MCF 10A (cell line): ENCODE measurements at regions of chr17 and their contacts with region 1.

Region 1: DNA sequence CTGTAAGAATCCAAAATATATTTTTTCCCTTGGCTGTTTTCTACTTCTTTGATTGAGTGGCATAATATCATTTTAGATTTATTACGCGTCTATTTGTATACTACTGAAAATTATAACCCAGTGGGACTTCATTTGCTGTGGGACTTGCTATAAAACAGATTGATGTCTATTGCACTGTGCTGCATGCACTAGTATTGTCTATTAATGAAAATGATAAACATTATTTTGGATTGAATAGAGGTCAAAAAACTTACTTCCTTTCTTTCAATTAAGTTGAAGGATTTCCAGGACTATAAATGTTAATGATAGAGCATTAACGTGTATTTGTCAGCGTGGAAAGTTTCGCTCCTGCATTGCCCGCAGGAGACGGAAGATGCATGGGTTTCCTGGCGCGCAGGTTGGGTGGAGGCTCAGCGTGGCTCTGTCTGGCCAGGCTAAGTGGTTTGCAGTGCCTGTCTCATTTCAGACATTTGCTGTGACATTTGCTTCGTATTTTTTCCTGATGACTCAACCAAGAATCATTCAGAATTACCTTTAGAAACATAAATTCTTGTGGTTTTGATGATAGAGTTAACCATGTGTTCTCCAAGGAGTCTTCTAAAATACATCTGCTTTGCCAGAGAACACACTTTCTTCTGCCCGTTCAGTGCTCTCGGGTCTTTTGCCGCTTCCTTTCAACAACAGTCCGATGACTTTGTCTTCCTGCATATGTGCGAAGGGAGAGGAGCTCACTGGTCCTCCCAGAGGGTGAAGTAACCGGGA is 216.7 kb downstream of the RPTOR start:
- DNase-seq: peak; percentile 77
- H3K4me3 Mint-ChIP-seq: peak overlapping the region; percentile 59
- H3K27ac Mint-ChIP-seq: peak overlapping the region; percentile 75
- H3K4me1 Mint-ChIP-seq: peaks cover 24% of the 10 kb centered on the region
- H3K27me3 Mint-ChIP-seq: no peaks in the 10 kb centered on the region
- CTCF ChIP-seq: no peak

Region 2: DNA sequence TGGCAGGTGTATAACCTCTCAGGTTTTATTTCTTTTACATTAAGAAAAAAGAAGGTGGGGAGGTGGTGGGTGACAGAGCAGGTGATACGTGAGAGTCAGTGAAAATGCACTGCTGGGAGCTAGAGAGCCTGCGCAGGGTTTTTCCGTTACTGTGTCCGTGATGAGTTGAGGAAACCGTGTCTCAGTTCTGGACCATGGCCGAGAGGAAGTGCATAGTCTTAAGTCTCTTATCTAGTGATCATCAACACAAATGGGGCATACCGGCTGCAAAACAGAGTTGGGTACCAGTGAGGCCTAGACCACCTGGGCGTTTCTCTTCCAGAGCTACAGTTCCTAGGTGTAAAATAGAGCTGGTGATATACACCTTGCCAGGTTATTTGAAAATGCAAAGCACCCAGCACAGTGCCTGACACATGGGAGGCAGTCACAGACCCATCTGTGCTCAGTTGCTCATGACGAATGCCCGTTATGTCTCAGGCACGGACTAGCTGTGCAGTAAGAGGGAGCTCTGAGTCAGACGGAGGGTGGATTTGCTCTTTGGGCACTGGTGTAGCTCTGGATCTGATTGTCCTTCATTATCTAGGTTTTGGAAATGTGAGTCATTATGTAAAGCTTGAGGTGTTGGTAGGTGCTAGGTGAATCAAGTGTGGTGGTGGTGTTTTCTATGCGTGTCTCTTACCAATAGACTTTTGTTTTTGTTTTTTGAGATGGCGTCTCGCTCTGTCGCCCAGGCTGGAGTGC is 155.8 kb before region 1 on chr17:
- CTCF ChIA-PET with region 1: no interaction called
- POLR2A ChIA-PET with region 1: interaction called, 4 read pairs
- intact Hi-C with region 1: loop called (anchors 10 kb)
- DNase-seq: peak; percentile 92
- H3K4me3 Mint-ChIP-seq: peak overlapping the region; percentile 47
- H3K27ac Mint-ChIP-seq: peak overlapping the region; percentile 8
- H3K4me1 Mint-ChIP-seq: peaks cover 29% of the 10 kb centered on the region
- H3K27me3 Mint-ChIP-seq: no peaks in the 10 kb centered on the region
- CTCF ChIP-seq: no peak

Region 3: DNA sequence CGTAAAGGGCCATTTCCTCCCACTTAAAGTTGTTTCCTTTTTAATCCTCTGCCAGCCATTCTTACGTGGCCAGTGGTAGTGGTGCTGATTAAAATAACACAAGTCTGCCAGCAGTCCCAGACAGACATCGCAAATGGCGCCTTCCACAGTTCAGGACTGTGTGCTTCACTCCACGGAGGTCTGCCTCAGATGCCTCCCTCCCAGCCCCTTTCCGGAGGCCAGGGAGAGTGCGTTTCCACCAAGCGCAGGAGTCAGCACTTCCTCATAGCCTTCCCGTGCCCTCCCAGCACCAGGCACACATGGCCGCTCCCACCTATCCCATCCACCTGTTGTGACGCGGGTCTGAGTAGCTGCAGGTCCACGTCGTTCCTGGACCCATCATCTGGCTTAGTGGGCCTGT is 11.0 kb before region 1 on chr17:
- CTCF ChIA-PET with region 1: no interaction called
- POLR2A ChIA-PET with region 1: no interaction called
- intact Hi-C with region 1: no loop called
- DNase-seq: no peak
- H3K4me3 Mint-ChIP-seq: no peak overlapping the region
- H3K27ac Mint-ChIP-seq: no peak overlapping the region
- H3K4me1 Mint-ChIP-seq: peaks cover 6% of the 10 kb centered on the region
- H3K27me3 Mint-ChIP-seq: no peaks in the 10 kb centered on the region
- CTCF ChIP-seq: no peak

Region 4: DNA sequence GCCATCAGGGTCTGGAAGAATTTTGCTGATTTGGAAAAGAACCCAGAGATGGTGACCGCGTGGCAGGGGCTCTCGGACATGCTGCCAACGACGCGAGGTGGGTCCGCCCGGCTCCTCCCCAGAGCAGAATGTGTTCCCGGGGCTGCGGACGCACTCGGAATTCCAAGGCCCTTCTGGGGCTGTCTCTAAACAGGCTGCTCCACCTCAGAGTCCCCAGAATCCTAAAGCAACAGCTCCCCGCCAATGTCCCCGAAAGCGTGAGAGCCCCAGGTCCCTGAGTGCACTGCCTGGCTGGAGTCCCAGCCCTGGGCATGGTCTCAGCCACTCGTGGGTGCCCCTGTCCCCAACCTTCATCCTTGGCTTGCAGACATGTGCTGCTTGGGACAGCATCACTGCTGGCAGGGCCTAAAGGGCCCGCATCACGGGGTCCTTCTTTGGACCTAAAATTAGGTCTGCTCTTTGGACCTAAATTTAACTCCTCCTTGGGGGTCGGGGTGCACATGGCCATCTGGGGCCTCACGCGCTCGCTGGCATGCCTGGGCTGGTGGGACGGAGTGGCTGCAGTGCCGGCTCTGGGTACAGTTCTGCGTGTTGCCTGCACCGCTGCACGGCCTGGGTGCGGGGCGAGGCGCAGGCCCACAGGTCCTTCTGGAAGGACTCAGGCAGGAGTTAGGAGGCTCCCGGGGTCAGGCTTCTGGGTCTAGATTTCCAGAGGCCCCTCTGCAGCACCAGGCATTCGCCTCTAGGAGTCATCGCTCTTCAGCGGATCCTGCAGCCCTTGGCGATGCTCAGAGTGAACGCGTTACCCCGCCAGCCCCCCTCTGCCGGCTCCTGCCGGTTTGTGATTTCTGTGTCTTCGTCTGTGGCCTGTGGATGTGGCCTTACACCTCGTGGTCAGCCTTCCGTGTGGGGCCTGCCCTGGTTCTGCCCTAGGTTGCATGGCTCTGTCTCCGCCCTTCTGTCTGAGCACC is 188.4 kb after region 1 on chr17:
- CTCF ChIA-PET with region 1: no interaction called
- POLR2A ChIA-PET with region 1: no interaction called
- intact Hi-C with region 1: no loop called
- DNase-seq: no peak
- H3K4me3 Mint-ChIP-seq: no peak overlapping the region
- H3K27ac Mint-ChIP-seq: no peak overlapping the region
- H3K4me1 Mint-ChIP-seq: no peaks in the 10 kb centered on the region
- H3K27me3 Mint-ChIP-seq: no peaks in the 10 kb centered on the region
- CTCF ChIP-seq: no peak